Left cardiac atrium (tissue), 4 donors: ENCODE measurements at regions of chr9 and their contacts with region 1.

Region 1: GRCh38 chr9:97598461-97599288 is 34.5 kb downstream of the TSTD2 start:
- DNase-seq: peak; percentile 79
- ATAC-seq: peak; percentile 55 to 72

Region 2: GRCh38 chr9:97324954-97325353 is 273.7 kb before region 1 on chr9:
- intact Hi-C with region 1: no loop called
- DNase-seq: no peak
- ATAC-seq: no peak

Region 3: DNA sequence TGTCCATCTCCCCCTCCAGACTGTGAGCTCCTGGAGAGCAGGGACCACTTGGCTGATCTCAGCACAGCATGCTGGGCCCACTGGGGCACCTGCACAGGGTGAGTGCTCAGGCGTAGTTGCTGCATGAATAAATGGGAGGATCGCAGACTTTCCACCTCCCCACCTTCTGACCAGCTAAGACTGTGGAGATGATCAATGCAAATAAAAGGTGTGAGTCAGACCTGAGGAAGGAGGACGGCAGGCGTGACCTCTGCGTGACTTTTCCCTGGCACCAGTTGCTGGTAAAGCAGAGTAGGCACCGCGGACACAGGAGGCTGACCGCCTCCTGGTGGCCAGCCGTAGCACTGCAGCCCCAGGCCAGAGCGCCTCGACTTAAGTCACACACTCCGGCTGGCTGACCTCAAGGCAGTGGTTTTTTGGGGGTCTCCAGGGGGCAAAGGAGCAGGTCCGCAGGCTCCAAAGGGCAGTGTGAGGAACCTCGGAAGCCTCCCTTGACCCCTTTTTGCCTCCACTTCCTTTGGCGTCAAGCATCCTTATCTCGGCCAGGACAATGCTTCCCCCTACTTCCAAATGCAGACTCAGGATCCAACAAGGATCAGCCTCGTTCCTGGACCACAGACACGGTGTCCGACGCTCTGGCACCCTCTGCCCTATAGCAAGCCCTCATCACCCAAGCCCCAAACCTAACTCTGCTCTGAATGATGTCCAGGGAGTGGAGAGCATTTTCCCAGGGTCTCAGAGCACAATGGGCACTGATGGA is 199.5 kb before region 1 on chr9:
- intact Hi-C with region 1: no loop called
- DNase-seq: peak; percentile 71
- ATAC-seq: peak; percentile 84 to 93

Region 4: DNA sequence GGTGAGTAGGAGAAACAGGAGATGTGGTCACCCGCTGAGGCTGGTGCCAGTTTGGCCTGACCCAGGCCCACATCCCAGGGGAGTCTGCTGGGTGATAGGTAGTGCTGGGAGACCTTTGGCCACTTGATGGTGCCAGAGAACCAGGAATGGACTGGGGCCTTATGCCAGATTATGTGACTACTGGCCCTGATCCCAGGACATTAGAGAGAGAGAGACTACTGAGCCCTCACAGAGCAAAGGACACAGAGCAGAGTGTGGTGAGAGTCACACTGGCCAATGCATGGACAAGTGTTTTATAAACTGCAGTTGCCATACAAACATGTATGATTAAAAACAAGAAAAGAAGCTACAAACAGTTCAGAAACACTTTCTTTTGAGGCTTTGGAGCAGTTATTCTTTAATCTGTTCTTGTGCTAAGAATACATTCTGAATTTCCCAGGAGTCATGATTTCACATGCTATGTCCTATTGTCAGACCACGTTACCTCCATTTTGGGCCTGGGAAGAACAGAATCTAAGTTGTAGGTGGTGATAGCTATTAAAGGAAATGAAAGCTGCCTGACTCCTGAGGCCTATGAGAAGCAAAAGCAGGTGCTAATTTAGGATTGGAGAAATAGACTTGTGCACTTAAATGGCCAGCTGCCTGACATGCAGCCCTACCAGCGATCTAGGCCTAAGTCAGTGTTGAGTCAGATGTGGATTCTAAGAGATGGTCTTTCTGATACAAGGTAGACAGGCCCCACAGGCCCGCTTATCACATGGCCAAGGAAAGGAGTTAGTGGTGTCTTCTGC is 129.8 kb before region 1 on chr9:
- intact Hi-C with region 1: loop called in 1 of 2 experiments (anchors 1 kb)
- DNase-seq: peak; percentile 76
- ATAC-seq: peak; percentile 97 to 98

Region 5: GRCh38 chr9:97501177-97501971 is 97.3 kb before region 1 on chr9 and contains the start of gene TMOD1:
- intact Hi-C with region 1: loop called in 1 of 2 experiments (anchors 1 kb)
- DNase-seq: peak; percentile 83
- ATAC-seq: peak; percentile 79 to 87
- total RNA-seq, gene TMOD1: 142 to 149 TPM

Region 6: GRCh38 chr9:97529363-97530076 is 69.2 kb before region 1 on chr9:
- intact Hi-C with region 1: loop called in 1 of 2 experiments (anchors 10 kb)
- DNase-seq: peak; percentile 49
- ATAC-seq: peak; percentile 82 to 89

Region 7: GRCh38 chr9:97559111-97559514 is 39.6 kb before region 1 on chr9:
- intact Hi-C with region 1: loop called in 1 of 2 experiments (anchors 5 kb)
- DNase-seq: no peak
- ATAC-seq: peak in 1 of 2 donors; percentile 2

Region 8: GRCh38 chr9:97571664-97572063 is 27.0 kb before region 1 on chr9:
- intact Hi-C with region 1: loop called in 1 of 2 experiments (anchors 2 kb)
- DNase-seq: no peak
- ATAC-seq: peak; percentile 7 to 9